A549 (cell line): ENCODE measurements at regions of chr11 and their contacts with region 1.

Region 1: GRCh38 chr11:122853971-122854446 is 15.7 kb downstream of the CRTAM start:
- DNase-seq: peak; percentile 65 to 82
- ATAC-seq: peak; percentile 24 to 53; a peak in 3 of 6 replicates
- H3K4me3 ChIP-seq: no peak overlapping the region
- H3K27ac ChIP-seq: peak overlapping the region; percentile 93 to 94; a peak in 5 of 6 replicates
- H3K4me1 ChIP-seq: peaks cover 32% of the 10 kb centered on the region
- CTCF ChIP-seq: peak; percentile 83
- EP300 ChIP-seq: no peak
- POLR2A ChIP-seq: no peak
- RAD21 ChIP-seq: peak; percentile 84 to 87

Region 2: DNA sequence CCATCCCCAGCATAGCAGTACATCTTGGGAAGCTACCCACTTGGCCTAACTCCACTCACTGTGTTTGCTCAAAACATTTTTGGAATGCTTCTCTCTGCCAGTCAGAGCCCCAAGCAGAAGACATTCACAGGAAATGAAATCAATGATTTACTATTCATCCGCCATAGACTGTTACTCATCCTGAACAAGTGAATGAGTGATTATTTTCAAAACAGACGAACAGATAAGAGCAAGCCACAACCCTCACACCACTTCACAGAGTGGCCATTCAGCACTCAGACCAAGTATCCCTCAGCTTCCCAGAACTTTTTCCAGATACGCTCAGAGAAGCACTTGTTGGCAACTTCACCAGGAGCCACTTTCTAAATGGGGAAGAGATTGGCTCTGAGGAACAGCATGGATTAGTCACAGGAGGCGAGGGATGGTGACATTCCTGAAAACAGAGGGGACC is 211.5 kb before region 1 on chr11:
- CTCF ChIA-PET with region 1: interaction called, 16 read pairs
- POLR2A ChIA-PET with region 1: no interaction called
- DNase-seq: peak; percentile 82 to 95
- ATAC-seq: peak; percentile 95 to 96
- H3K4me3 ChIP-seq: peak overlapping the region; percentile 24
- H3K27ac ChIP-seq: peak overlapping the region; percentile 92 to 97
- H3K4me1 ChIP-seq: peaks cover 49% of the 10 kb centered on the region
- CTCF ChIP-seq: no peak
- EP300 ChIP-seq: peak; percentile 81 to 84
- POLR2A ChIP-seq: no peak
- RAD21 ChIP-seq: peak; percentile 8 to 37; a peak in 1 of 5 replicates

Region 3: DNA sequence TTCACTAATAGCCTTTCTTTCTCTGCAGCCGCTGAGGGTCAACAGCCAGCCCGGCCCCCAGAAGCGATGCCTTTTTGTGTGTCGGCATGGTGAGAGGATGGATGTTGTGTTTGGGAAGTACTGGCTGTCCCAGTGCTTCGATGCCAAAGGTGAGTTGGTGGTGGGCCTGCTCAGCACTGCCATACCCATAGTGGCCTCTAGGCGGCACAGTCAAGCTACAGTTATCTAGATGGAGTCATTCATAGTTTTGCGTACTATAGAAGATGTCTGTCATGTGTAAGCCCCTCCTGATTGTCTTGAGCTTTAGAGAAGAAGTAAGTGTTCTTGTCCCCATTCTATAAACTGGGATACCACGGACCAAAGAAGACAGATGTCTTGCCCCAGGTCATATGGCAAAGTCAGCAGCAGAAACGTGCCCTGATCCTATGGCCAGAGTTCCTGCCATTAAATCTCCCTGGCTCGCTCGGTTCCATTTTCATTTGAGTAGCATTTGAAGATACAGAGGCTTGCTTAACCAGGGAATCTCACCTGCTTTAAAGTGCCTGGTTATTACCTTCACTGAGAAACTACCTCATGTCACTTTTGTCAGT is 57.8 kb before region 1 on chr11:
- CTCF ChIA-PET with region 1: interaction called, 17 read pairs
- POLR2A ChIA-PET with region 1: no interaction called
- DNase-seq: peak; percentile 19 to 26
- ATAC-seq: peak; percentile 54 to 81; a peak in 5 of 6 replicates
- H3K4me3 ChIP-seq: no peak overlapping the region
- H3K27ac ChIP-seq: no peak overlapping the region
- H3K4me1 ChIP-seq: peaks cover 9% of the 10 kb centered on the region
- CTCF ChIP-seq: peak; percentile 43
- EP300 ChIP-seq: no peak
- POLR2A ChIP-seq: no peak
- RAD21 ChIP-seq: peak; percentile 18 to 37; a peak in 2 of 5 replicates

Region 4: GRCh38 chr11:122832721-122833470 is 21.1 kb before region 1 on chr11:
- CTCF ChIA-PET with region 1: interaction called, 14 read pairs
- POLR2A ChIA-PET with region 1: no interaction called
- DNase-seq: no peak
- ATAC-seq: no peak
- H3K4me3 ChIP-seq: no peak overlapping the region
- H3K27ac ChIP-seq: no peak overlapping the region
- H3K4me1 ChIP-seq: no peaks in the 10 kb centered on the region
- CTCF ChIP-seq: no peak
- EP300 ChIP-seq: no peak
- POLR2A ChIP-seq: no peak
- RAD21 ChIP-seq: no peak

Region 5: DNA sequence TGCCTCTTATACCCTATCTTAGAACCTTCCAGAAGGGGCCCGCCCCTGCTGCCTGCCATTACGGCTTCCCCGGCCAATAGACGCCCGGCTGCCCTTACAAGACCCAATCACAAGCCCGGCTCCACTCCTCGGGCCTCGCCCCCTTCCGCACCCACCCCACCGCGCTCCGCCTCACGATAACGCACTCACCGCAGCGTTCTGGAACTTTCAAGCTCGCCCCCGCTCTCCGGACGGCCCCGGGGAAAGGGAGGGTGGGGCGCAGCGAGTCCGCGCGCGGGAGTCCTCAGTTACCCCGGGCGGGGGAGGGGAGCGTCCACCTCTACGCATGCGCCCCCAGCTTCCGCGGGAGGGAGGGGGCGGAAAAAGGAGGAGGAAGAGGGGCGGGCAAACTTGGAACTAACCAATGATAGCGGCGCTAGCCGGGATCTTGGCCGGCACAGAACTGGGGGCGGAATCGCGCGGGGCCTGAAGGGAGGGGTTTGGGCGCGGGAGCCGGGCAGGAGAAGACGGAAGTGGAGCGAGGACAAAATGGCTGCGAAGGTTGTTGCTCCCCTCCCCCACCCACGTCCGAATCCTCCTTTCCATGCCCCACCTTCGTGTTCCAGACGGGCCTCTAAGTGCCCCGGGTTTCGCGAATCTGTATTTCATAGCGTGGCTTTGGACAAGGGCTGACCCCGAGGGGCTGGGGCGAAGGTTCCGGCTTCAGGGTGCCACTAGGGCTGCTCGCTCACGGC is 208.3 kb after region 1 on chr11:
- CTCF ChIA-PET with region 1: no interaction called
- POLR2A ChIA-PET with region 1: interaction called, 10 read pairs
- DNase-seq: peak; percentile 76 to 97
- ATAC-seq: peak; percentile 92 to 93
- H3K4me3 ChIP-seq: peak overlapping the region; percentile 98
- H3K27ac ChIP-seq: peak overlapping the region; percentile 98 to 100
- H3K4me1 ChIP-seq: peaks cover 40% of the 10 kb centered on the region
- CTCF ChIP-seq: no peak
- EP300 ChIP-seq: no peak
- POLR2A ChIP-seq: peak; percentile 26
- RAD21 ChIP-seq: no peak

Region 6: DNA sequence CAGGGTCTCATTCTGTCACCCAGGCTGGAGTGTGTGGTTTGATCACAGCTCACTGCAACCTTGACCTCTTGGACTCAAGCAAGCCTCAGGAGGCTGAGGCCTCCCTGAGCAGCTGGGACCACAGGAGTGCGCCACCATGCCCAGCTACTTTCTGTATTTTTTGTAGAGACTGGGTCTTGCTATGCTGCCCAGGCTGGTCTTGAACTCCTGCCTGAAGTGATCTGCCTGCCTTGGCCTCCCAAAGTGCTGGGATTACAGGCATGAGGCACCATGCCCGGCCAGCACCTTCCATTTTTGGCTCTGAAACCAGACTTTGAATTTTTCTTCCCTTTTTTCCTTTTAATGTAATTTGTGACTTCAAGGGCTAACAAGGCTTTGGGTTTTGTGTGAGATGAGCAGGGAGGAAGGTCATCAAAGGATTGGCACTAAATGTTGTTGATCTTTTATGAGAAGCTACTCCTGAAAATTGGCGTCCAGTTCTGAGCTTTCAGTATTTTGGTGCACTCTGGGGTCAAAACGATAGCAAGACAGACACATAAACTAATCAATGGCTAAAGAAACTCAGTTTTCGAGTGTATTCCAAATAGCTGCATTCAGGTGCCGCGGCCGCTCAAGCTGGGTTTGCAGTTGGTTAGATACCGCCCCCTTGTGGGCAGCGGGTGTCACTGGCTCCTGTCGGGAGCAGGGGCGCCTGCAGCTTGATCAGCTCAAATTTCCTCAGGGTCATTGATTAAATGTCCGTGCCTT is 392.9 kb after region 1 on chr11:
- CTCF ChIA-PET with region 1: no interaction called
- POLR2A ChIA-PET with region 1: no interaction called
- DNase-seq: peak; percentile 60 to 75
- ATAC-seq: peak; percentile 89 to 94
- H3K4me3 ChIP-seq: no peak overlapping the region
- H3K27ac ChIP-seq: peak overlapping the region; percentile 67 to 80; a peak in 5 of 6 replicates
- H3K4me1 ChIP-seq: peaks cover 23% of the 10 kb centered on the region
- CTCF ChIP-seq: peak; percentile 91
- EP300 ChIP-seq: no peak
- POLR2A ChIP-seq: no peak
- RAD21 ChIP-seq: peak; percentile 97